Heart left ventricle (tissue), 16 donors: ENCODE measurements at regions of chr2 and their contacts with region 1.

Region 1: DNA sequence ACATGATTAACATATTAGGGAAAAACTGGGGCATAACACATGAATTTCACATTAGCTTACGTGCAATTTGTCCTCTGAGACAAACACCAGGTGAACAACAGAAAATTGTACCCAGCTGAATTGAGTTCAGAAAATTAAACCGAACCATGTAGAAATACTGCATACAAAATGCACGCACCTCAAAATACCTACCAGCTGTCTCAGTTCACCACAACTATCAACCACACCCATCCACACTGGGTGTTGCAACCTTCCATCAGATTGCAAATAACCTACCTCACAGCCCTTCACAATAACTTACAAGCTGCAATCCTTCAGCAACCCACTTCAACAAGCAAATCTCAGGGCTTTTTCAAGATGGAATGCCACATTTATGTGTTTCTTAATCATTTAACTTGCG is 55.9 kb downstream of the UNC50 start:
- DNase-seq: no peak
- ATAC-seq: no peak
- H3K4me3 ChIP-seq: no peak overlapping the region
- H3K27ac ChIP-seq: peak overlapping the region in 1 of 12 donors; percentile 78
- H3K4me1 ChIP-seq: peaks cover 0 to 25% (median 0%) of the 10 kb centered on the region in 12 donors
- H3K27me3 ChIP-seq: no peaks in the 10 kb centered on the region
- CTCF ChIP-seq: no peak
- POLR2A ChIP-seq: no peak

Region 2: GRCh38 chr2:98541906-98542305 is 122.4 kb before region 1 on chr2:
- intact Hi-C with region 1: no loop called
- DNase-seq: no peak
- ATAC-seq: peak in 3 of 4 donors; percentile 23 to 39 (median 31)
- H3K4me3 ChIP-seq: no peak overlapping the region
- H3K27ac ChIP-seq: peak overlapping the region in 1 of 12 donors; percentile 9
- H3K4me1 ChIP-seq: peaks cover 0 to 7% (median 0%) of the 10 kb centered on the region in 12 donors
- H3K27me3 ChIP-seq: no peaks in the 10 kb centered on the region
- CTCF ChIP-seq: no peak
- POLR2A ChIP-seq: no peak

Region 3: DNA sequence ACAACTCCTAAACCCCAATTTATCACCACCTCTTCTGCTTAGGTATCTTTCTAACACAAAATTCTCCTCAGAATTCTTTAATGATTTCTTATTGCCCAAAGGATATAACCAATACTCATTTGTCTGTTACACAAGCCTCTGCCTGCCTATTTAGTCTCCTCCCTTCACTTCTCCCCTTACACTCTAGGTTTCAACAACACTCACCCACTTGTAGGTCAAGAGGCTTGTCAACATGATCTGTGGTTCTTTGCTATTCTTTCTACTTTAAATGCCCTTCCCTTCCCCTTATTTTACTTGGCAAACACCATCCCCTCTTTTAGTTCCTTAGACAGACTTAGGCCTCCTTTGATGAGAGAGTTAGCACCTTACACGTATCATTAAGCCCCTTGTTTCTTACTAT is 408.2 kb after region 1 on chr2:
- intact Hi-C with region 1: loop called in 2 of 10 experiments (anchors 5 to 10 kb)
- DNase-seq: no peak
- ATAC-seq: no peak
- H3K4me3 ChIP-seq: no peak overlapping the region
- H3K27ac ChIP-seq: no peak overlapping the region
- H3K4me1 ChIP-seq: no peaks in the 10 kb centered on the region
- H3K27me3 ChIP-seq: peaks cover 0 to 13% (median 0%) of the 10 kb centered on the region in 9 donors
- CTCF ChIP-seq: no peak
- POLR2A ChIP-seq: no peak